ENCODE measurements at regions of chr11 and their contacts with region 1.

Region 1: DNA sequence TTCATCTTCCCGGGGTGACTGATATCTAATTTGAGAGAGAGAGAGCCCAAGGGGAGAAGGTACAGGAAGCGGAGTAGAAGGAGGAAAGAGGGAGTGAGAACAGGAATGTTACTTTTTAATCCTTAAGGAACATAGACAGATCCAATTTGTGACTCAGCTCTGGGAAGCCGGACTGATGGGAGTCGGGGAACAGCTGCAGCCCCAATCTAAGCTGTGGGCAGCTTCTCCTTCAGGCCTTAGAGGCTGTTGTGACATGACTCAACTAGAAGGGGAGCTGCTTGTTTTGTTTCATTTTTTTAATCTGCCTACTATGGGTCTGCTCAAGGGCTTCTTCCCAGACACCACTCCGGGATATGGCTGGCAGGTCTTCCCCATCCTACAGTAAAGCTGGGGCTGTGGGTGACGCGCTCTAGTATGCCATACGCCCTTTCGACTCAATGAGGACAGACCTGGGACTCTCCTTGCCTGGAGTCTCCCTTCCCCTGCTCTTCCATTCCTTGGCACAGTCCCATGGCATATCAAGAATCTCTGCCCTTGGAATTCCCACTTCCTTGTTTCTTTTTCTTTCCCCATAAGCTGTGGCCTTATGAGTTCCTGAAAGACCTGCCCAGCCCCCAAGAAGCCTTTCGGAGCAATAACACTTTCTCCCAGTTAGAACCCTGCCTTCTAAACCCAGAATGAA is 103.3 kb upstream of the AKIP1 start:
- DNase-seq: peak in 2 of 6 donors; percentile 41 to 57
- ATAC-seq: peak; percentile 19 to 38 (median 28)
- H3K4me3 ChIP-seq: peak overlapping the region in 2 of 4 donors; percentile 44 to 75
- H3K27ac ChIP-seq: peak overlapping the region in 2 of 4 donors; percentile 60 to 74
- H3K4me1 ChIP-seq: peaks cover 8 to 55% (median 10%) of the 10 kb centered on the region in 3 donors
- H3K27me3 ChIP-seq: no peaks in the 10 kb centered on the region
- CTCF ChIP-seq: no peak

Region 2: GRCh38 chr11:8699903-8700302 is 107.8 kb before region 1 on chr11:
- intact Hi-C with region 1: loop called in 2 of 3 experiments (anchors 10 kb)
- DNase-seq: peak in 4 of 6 donors; percentile 58 to 71 (median 59)
- ATAC-seq: peak; percentile 74 to 85 (median 83)
- H3K4me3 ChIP-seq: no peak overlapping the region
- H3K27ac ChIP-seq: peak overlapping the region; percentile 71 to 83 (median 78)
- H3K4me1 ChIP-seq: peaks cover 7 to 15% (median 10%) of the 10 kb centered on the region in 3 donors
- H3K27me3 ChIP-seq: no peaks in the 10 kb centered on the region
- CTCF ChIP-seq: no peak

Measured in pancreas (tissue), 10 donors.